Esophagus muscularis mucosa (tissue), 4 donors: ENCODE measurements at regions of chr10 and their contacts with region 1.

Region 1: GRCh38 chr10:87659571-87660483 is at the start of gene PAPSS2:
- DNase-seq: no peak
- H3K4me3 ChIP-seq: peak within 1 kb of the TSS; percentile 62 to 81 (median 70)
- H3K27ac ChIP-seq: peak within 1 kb of the TSS; percentile 65 to 80 (median 75)
- H3K4me1 ChIP-seq: peaks cover 8 to 31% (median 27%) of the 10 kb centered on the region in 4 donors
- H3K27me3 ChIP-seq: peaks cover 0 to 32% (median 4%) of the 10 kb centered on the region in 4 donors
- CTCF ChIP-seq: no peak
- EP300 ChIP-seq: no peak
- POLR2A ChIP-seq: no peak
- total RNA-seq, gene PAPSS2: 9.6 to 16.7 (median 14.9) TPM

Region 2: GRCh38 chr10:87538092-87539015 is 121.5 kb before region 1 on chr10:
- intact Hi-C with region 1: loop called (anchors 5 kb)
- DNase-seq: no peak
- H3K4me3 ChIP-seq: no peak overlapping the region
- H3K27ac ChIP-seq: no peak overlapping the region
- H3K4me1 ChIP-seq: peaks cover 0 to 9% (median 4%) of the 10 kb centered on the region in 4 donors
- H3K27me3 ChIP-seq: no peaks in the 10 kb centered on the region
- CTCF ChIP-seq: no peak
- EP300 ChIP-seq: no peak
- POLR2A ChIP-seq: no peak

Region 3: DNA sequence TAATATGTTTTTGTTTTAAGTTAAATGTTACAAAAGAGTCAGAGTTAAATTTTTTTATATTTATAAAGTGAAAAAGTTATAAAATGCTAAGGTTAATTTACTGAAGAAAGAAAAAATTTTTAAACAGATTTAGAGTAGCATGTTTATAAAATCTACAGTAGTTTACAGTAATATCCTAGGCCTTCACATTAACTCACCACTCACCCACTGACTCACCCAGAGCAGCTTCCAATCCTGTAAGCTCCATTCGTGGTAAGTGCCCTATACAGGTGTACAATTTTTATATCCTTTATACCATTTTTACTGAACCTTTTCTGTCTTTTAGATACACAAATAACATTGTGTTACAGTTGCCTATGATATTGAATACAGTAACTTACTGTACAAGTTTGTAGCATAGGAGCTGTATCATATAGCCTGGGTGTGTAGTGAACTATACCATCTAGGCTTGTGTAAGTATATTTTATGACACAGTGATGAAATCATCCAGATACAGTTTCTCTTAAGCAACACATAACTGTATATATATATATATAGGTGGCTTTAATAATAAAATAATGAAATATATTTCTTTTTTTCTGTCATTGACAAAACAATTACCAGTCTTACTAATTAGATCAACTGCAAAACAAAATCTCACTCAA is 283.2 kb after region 1 on chr10:
- intact Hi-C with region 1: no loop called
- DNase-seq: no peak
- H3K4me3 ChIP-seq: no peak overlapping the region
- H3K27ac ChIP-seq: no peak overlapping the region
- H3K4me1 ChIP-seq: peaks cover 0 to 31% (median 15%) of the 10 kb centered on the region in 4 donors
- H3K27me3 ChIP-seq: no peaks in the 10 kb centered on the region
- CTCF ChIP-seq: no peak
- EP300 ChIP-seq: no peak
- POLR2A ChIP-seq: no peak